ENCODE measurements at regions of chr11 and their contacts with region 1.

Region 1: DNA sequence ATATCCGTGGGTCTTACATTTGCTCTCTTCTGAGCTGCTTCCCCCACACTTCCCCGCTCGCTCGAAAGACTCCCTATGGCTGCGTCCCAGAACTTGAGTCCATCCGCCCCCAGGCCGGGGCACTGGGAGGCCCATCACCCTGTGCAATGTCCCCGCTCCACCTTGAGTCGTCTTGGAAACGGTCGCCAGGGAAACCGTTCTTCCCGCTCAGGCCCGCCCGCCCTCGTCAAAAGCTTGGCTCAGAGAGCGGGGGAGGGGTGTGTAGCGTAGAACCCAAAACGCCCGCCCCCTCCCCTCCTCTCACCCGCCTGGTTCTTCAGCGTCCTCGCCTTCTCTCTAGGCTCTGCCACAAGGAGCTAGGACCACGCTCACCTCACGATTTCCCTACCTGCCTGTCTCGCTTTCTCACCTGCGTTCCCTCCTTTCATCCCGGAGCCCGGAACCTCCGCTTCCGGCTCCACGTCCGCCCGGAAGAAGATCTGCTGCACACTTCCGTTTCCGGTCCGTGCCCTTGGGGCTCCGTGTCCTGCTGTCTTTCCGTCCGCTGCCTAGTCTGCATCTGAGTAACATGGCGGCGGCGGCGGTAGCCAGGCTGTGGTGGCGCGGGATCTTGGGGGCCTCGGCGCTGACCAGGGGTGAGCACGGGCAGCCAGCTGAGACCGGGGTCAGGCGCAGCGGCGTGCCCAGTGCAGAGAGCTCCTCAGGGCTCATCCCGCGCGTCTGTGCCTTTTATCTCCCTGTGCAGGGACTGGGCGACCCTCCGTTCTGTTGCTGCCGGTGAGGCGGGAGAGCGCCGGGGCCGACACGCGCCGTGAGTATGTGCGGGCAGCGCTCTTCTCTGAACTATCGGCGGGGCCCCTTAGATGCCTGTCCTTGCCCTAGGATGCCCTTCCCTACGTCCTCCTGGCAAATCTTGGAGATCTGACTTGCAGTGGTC is at the starts of genes KBTBD4 and NDUFS3:
- DNase-seq: peak; percentile 77
- ATAC-seq: peak; percentile 95
- H3K4me3 ChIP-seq: peak within 1 kb of the TSS; percentile 95 to 99 (median 97)
- H3K27ac ChIP-seq: peak within 1 kb of the TSS; percentile 82
- H3K4me1 ChIP-seq: peaks cover 24% of the 10 kb centered on the region
- H3K27me3 ChIP-seq: no peaks in the 10 kb centered on the region; a peak in 1 of 5 replicates
- CTCF ChIP-seq: peak; percentile 20; the same call in 1 of the 2 replicates
- EP300 ChIP-seq: peak in 1 of 2 experiments; percentile 55; a peak in 2 of 4 replicates
- POLR2A ChIP-seq: peak; percentile 56 to 86; a peak in 3 of 4 replicates
- RAD21 ChIP-seq: peak; percentile 51; the same call in 1 of the 2 replicates
- total RNA-seq, gene KBTBD4: 12.8 and 16.3 TPM in 2 replicates
- total RNA-seq, gene NDUFS3: 151 and 177 TPM in 2 replicates

Region 2: GRCh38 chr11:47514825-47515647 is 63.8 kb before region 1 on chr11:
- CTCF ChIA-PET with region 1: no interaction called
- POLR2A ChIA-PET with region 1: no interaction called
- in situ Hi-C with region 1: no loop called
- intact Hi-C with region 1: no loop called
- DNase-seq: no peak
- ATAC-seq: no peak
- H3K4me3 ChIP-seq: no peak overlapping the region
- H3K27ac ChIP-seq: no peak overlapping the region
- H3K4me1 ChIP-seq: peaks cover 80% of the 10 kb centered on the region
- H3K27me3 ChIP-seq: no peaks in the 10 kb centered on the region
- CTCF ChIP-seq: no peak
- EP300 ChIP-seq: no peak
- POLR2A ChIP-seq: no peak
- RAD21 ChIP-seq: no peak

Region 3: DNA sequence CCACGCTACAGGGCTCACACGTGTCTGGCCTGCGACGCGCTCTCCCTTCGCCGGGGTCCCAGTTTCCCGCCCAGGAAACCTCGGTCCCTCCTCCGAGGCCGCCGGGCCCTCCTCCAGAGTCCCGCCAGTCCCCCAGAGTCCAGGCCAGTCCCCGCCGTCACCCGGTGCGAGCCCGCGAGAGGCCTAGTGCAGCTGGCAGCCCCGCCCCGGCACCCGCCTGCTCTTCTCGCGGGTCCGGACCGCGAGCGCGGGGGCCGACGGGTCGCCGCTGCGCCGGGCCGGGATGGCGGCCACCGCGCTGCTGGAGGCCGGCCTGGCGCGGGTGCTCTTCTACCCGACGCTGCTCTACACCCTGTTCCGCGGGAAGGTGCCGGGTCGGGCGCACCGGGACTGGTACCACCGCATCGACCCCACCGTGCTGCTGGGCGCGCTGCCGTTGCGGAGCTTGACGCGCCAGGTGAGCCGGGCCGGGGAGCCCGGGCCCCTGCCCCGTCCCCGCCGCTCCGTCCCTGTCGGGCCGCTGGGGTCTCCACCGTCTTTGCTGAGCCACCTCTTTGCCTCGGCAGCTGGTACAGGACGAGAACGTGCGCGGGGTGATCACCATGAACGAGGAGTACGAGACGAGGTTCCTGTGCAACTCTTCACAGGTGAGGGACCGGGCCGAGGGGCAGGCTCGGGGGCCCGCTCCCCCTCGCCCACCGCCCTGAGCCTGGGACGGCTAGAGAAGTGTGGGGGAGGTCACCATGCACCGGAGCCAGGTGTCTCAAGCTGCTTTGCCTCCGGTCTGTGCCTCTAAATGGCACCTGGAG is 13.2 kb before region 1 on chr11 and contains the start of gene PTPMT1:
- CTCF ChIA-PET with region 1: no interaction called
- POLR2A ChIA-PET with region 1: interaction called, 15 read pairs
- in situ Hi-C with region 1: no loop called
- intact Hi-C with region 1: no loop called
- DNase-seq: peak; percentile 68
- ATAC-seq: peak; percentile 98
- H3K4me3 ChIP-seq: peak within 1 kb of the TSS; percentile 87 to 97 (median 97)
- H3K27ac ChIP-seq: peak within 1 kb of the TSS; percentile 85
- H3K4me1 ChIP-seq: peaks cover 26% of the 10 kb centered on the region
- H3K27me3 ChIP-seq: no peaks in the 10 kb centered on the region
- CTCF ChIP-seq: no peak; the same call in 1 of the 2 replicates
- EP300 ChIP-seq: no peak
- POLR2A ChIP-seq: peak; percentile 79
- RAD21 ChIP-seq: no peak; the same call in 1 of the 2 replicates
- total RNA-seq, gene PTPMT1: 91.5 and 129 TPM in 2 replicates